ENCODE measurements at regions of chr4 and their contacts with region 1.

Region 1: DNA sequence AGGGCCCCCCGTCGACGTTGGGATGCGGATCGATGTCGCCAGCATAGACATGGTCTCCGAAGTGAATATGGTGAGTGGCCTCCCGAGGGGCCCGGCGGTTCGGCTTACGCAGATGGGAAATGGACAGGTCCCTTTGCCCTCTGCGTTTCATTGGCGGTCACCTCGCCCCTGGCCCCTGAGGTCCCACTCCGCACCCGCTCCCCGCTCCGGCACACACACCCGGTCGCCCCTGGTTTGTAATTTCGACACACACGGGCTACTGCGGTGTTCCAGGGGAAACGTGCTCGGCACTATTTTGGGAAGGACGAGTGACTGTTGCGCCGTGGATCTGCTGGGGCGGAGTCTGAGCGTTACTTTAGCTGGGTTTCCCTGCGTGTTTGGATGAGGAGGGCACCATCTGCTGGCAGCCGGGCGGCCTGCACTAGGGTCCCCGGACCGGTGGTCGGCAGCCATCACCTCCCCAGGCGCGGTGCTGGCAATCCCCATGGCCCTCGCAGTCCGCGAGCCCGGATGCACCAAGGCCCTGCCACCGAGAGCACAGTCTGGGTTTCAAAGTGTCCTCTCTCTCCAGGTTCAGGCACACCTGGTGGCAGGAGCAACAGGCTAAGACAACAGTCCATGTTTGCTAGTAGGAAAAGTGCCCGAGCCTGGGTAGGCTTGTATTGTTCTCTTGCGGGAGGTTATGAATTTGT is 1.2 kb downstream of the GABRB1 start:
- DNase-seq: peak; percentile 70
- ATAC-seq: peak; percentile 96

Region 2: DNA sequence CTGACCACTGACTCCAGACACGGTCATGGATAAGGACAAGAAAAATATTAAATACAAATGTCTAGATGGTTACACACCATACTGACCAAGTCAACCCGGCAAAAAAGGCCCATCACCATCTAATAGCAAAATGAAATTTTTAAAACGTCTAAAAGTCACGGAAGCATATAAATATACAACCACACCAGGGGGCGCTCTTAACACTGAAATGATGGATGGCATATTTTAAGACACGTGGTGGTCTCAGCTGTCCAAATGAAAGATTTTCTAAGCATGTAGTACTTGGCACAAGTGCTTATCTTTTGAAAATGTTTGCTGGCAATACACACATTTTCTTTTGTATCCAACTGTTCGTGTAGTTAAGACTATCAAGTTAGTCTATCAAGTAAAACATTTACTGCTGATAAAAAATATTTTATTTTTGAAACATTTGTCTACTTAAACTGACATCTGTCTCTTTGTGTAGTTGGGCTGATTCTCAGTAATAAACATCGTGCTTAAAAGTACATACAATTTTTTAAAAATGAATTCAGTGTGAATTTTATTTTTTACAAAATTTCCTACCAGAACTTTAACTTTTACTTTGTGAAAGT is 188.1 kb before region 1 on chr4:
- intact Hi-C with region 1: loop called (anchors 5 kb)
- DNase-seq: no peak
- ATAC-seq: no peak

Region 3: GRCh38 chr4:46931981-46932380 is 100.6 kb before region 1 on chr4:
- intact Hi-C with region 1: loop called (anchors 10 kb)
- DNase-seq: no peak
- ATAC-seq: peak; percentile 86